MCF 10A (cell line): ENCODE measurements at regions of chr10 and their contacts with region 1.

Region 1: GRCh38 chr10:87771871-87772500 is 46.0 kb downstream of the ATAD1 start:
- DNase-seq: peak; percentile 39
- H3K4me3 Mint-ChIP-seq: no peak overlapping the region
- H3K27ac Mint-ChIP-seq: no peak overlapping the region
- H3K4me1 Mint-ChIP-seq: peaks cover 11% of the 10 kb centered on the region
- H3K27me3 Mint-ChIP-seq: no peaks in the 10 kb centered on the region
- CTCF ChIP-seq: peak; percentile 33

Region 2: DNA sequence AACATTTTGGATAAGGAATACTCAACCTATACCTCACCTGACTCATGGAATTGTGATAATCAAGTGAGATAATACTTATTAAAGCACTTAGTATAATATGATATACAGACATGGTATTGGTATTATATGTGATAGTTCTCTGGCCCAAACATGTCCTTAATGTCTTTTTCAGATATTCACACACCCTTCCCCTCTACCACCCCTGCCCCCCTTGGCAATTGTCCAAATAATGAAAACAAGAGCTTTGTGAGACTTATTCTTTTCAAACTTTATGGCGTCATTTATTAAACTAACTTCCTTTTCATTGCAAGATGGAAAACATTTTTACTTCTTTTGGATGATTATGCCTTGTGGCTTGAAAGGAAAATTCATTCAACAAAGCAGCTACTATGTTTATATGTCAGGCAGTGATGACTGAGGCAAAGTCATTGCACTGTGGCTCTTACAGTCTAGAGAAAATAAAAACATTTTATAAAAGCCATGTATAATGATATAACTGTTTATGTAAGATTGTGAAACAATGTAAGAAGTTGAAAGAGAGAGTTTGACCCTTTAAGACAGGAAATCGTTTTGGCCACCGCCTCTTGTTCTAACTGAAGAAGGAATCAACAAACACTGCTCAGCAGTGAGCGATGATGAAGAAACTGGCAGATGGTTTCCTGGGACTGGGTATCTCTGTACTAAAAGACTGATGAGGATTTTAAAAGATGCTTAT is 239.9 kb before region 1 on chr10:
- CTCF ChIA-PET with region 1: interaction called, 6 read pairs
- POLR2A ChIA-PET with region 1: no interaction called
- intact Hi-C with region 1: loop called (anchors 1 kb)
- DNase-seq: peak; percentile 53
- H3K4me3 Mint-ChIP-seq: no peak overlapping the region
- H3K27ac Mint-ChIP-seq: no peak overlapping the region
- H3K4me1 Mint-ChIP-seq: no peaks in the 10 kb centered on the region
- H3K27me3 Mint-ChIP-seq: no peaks in the 10 kb centered on the region
- CTCF ChIP-seq: no peak

Region 3: GRCh38 chr10:87622314-87623004 is 149.5 kb before region 1 on chr10:
- CTCF ChIA-PET with region 1: no interaction called
- POLR2A ChIA-PET with region 1: no interaction called
- intact Hi-C with region 1: no loop called
- DNase-seq: no peak
- H3K4me3 Mint-ChIP-seq: no peak overlapping the region
- H3K27ac Mint-ChIP-seq: no peak overlapping the region
- H3K4me1 Mint-ChIP-seq: peaks cover 9% of the 10 kb centered on the region
- H3K27me3 Mint-ChIP-seq: no peaks in the 10 kb centered on the region
- CTCF ChIP-seq: no peak